ENCODE measurements at regions of chr2 and their contacts with region 1.

Region 1: DNA sequence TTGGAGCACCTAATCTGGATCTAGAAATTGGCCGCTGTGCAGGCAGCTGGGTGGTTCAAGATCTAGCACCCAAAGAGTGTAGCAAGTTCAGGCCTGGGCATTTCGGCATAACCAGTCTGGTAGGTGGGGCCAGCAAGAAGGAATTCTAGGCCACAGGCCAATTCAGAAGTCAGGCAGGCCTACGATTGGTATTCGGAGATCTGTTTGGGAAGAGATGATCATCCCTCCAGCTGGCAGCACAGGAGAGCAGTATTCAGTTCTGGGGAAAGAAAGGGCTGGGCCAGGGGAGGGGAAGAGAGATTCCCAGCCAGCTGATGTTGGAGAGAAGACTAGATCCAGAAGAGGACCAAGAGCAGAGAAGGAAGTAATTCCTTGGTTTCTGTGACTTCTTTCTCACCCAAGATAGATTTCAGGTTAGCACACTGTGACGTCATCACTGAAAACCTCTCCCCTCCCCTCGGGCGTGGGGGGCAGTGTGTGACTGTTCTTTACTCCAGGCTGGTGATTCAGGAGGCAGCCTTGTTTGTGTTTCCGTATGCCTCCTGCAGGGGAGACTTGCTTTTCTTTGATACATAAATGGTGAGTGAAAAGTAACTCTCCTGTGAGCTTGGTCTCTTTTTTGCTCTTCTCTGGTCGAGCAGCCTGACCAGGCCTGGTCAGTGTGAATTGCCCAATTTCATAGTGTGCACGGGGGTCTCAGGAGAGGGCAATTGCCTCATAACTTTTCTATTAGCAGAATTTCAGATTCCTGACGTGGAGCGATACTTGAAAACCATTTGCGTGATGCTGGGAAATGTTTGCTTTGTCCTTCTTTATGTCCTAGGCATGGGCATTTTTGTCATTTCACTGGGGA is 61.1 kb downstream of the MEIS1 start:
- DNase-seq: peak in 4 of 5 donors; percentile 30 to 60 (median 53)
- ATAC-seq: peak; percentile 63 to 83 (median 72)
- H3K4me3 ChIP-seq: peak overlapping the region in 1 of 12 donors; percentile 0
- H3K27ac ChIP-seq: peak overlapping the region in 11 of 12 donors; percentile 26 to 77 (median 56)
- H3K4me1 ChIP-seq: peaks cover 0 to 56% (median 25%) of the 10 kb centered on the region in 12 donors
- H3K27me3 ChIP-seq: no peaks in the 10 kb centered on the region
- CTCF ChIP-seq: peak in 3 of 12 donors; percentile 10 to 30 (median 22)
- POLR2A ChIP-seq: no peak

Region 2: DNA sequence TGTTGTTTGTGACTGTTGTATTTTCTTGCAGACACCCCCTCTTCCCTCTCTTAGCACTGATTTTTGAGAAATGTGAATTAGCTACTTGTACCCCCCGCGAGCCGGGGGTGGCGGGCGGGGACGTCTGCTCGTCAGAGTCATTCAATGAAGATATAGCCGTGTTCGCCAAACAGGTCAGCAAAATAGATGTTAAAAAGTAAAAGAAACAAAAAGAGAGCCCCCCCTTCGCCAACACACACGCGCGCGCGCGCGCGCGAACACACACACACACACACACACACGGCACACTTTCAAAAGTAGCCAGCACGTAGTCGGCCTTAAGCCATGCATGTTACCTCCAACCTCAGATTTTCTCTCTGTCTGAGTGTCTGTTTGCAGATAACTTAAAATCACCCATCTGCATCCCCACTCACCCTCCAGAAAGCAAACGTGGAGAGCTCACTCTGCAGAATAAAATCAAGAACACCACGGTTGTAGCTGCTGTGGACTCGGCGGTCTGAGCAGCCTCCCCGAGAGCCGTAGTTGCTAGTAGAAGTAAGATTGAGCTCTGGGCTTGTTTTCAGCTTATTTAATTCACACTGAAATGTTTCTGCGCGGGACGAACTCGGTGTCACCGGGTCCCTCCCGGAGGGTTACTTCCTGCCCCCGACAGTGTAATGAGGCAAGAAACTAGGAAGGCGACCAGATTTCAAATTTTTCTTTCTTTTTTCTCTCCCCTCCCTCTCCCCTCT is 56.0 kb before region 1 on chr2:
- intact Hi-C with region 1: loop called in 7 of 10 experiments (anchors 2 to 10 kb)
- DNase-seq: peak; percentile 25 to 56 (median 33)
- ATAC-seq: peak in 2 of 4 donors; percentile 2 to 4
- H3K4me3 ChIP-seq: peak overlapping the region; percentile 53 to 91 (median 74)
- H3K27ac ChIP-seq: peak overlapping the region; percentile 78 to 96 (median 92)
- H3K4me1 ChIP-seq: peaks cover 0 to 34% (median 8%) of the 10 kb centered on the region in 12 donors
- H3K27me3 ChIP-seq: peaks cover 0 to 65% (median 0%) of the 10 kb centered on the region in 9 donors
- CTCF ChIP-seq: no peak
- POLR2A ChIP-seq: no peak

Region 3: GRCh38 chr2:66445925-66446860 is 49.8 kb before region 1 on chr2:
- intact Hi-C with region 1: loop called in 4 of 10 experiments (anchors 5 kb)
- DNase-seq: peak; percentile 39 to 81 (median 74)
- ATAC-seq: peak; percentile 59 to 77 (median 75)
- H3K4me3 ChIP-seq: peak overlapping the region in 11 of 12 donors; percentile 22 to 50 (median 37)
- H3K27ac ChIP-seq: peak overlapping the region; percentile 67 to 95 (median 84)
- H3K4me1 ChIP-seq: peaks cover 0 to 34% (median 4%) of the 10 kb centered on the region in 12 donors
- H3K27me3 ChIP-seq: peaks cover 0 to 45% (median 0%) of the 10 kb centered on the region in 9 donors
- CTCF ChIP-seq: peak in 5 of 12 donors; percentile 15 to 39 (median 34)
- POLR2A ChIP-seq: no peak

Region 4: DNA sequence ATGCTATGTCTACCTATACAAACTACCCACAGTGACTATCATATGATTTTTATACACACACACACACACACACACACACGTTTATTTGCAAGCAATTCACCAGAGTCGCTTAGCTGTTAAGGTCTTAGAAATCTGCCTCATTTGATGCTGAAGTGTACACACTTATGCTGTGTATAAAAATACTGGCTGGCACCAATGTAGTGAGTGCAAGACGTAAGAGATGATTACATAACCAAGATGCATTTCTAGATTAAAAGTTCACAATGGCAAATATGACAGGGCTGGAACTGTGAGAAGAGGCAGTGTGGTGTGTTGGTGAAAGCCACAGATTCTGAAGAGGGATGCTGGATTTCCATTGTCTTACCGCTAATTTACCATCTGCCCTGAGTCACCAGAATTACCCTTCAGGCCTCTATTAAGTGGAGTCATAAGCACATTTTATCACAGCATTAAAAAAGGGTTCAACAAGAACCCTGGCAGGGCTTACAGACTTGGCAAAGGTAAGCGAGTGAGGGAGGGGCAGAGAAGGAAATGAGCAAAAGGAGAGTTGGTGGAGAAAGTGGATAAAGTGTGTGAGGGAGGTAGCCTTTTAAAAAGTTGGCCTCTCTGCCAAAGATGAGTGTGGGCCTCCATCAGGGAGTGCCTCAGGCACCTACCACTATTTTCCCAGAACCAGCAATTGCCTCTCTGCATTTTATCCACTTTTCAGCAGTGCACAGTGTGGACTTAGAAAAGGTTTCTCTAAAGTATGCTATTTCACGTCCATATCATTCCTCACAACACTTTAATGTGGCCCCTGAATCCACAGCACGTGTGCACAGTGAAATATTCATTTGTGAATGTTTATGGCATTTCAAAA is 39.6 kb before region 1 on chr2:
- intact Hi-C with region 1: loop called in 1 of 10 experiments (anchors 5 kb)
- DNase-seq: no peak
- ATAC-seq: peak; percentile 55 to 74 (median 65)
- H3K4me3 ChIP-seq: no peak overlapping the region
- H3K27ac ChIP-seq: peak overlapping the region in 5 of 12 donors; percentile 24 to 52 (median 39)
- H3K4me1 ChIP-seq: peaks cover 0 to 29% (median 2%) of the 10 kb centered on the region in 12 donors
- H3K27me3 ChIP-seq: no peaks in the 10 kb centered on the region
- CTCF ChIP-seq: no peak
- POLR2A ChIP-seq: no peak

Region 5: GRCh38 chr2:66651295-66651694 is 155.3 kb after region 1 on chr2:
- intact Hi-C with region 1: no loop called
- DNase-seq: no peak
- ATAC-seq: no peak
- H3K4me3 ChIP-seq: no peak overlapping the region
- H3K27ac ChIP-seq: no peak overlapping the region
- H3K4me1 ChIP-seq: no peaks in the 10 kb centered on the region
- H3K27me3 ChIP-seq: no peaks in the 10 kb centered on the region
- CTCF ChIP-seq: no peak
- POLR2A ChIP-seq: no peak

Region 6: DNA sequence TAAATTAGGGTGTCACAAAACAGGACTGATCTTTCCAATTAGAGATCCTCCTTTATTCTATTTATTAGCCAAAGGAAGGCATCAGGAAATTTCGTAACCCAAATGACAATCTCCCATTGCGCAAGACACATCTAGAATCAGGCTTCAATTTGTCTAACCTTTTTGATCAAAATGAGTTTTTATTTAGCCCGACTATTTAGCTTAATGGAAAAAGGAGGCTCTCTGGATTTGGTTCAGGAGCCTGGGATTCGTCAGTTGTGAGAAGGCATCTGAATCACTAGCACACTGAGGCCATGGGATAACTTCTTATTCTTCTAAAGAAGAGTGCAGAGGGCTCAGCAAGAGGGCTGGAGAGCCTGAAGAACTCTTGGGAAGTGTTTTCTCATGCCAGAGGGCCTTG is 569.0 kb after region 1 on chr2:
- intact Hi-C with region 1: no loop called
- DNase-seq: no peak
- ATAC-seq: no peak
- H3K4me3 ChIP-seq: no peak overlapping the region
- H3K27ac ChIP-seq: peak overlapping the region in 1 of 12 donors; percentile 72
- H3K4me1 ChIP-seq: no peaks in the 10 kb centered on the region
- H3K27me3 ChIP-seq: no peaks in the 10 kb centered on the region
- CTCF ChIP-seq: no peak
- POLR2A ChIP-seq: no peak

Measured in heart left ventricle (tissue), 16 donors.